GM12878 (cell line): ENCODE measurements at regions of chr6 and their contacts with region 1.

Region 1: GRCh38 chr6:39696986-39697788 is 28.0 kb downstream of the KIF6 start:
- DNase-seq: peak; percentile 38
- ATAC-seq: peak; percentile 87
- H3K4me3 ChIP-seq: no peak overlapping the region
- H3K27ac ChIP-seq: peak overlapping the region; percentile 25
- H3K4me1 ChIP-seq: peaks cover 7% of the 10 kb centered on the region; the same call in 1 of the 2 replicates
- H3K27me3 ChIP-seq: no peaks in the 10 kb centered on the region
- CTCF ChIP-seq: no peak
- EP300 ChIP-seq: no peak
- POLR2A ChIP-seq: no peak
- RAD21 ChIP-seq: no peak

Region 2: GRCh38 chr6:39714802-39715201 is 17.6 kb after region 1 on chr6:
- CTCF ChIA-PET with region 1: interaction called, 6 read pairs
- POLR2A ChIA-PET with region 1: interaction called, 3 read pairs
- RAD21 ChIA-PET with region 1: interaction called, 3 read pairs
- SMC1A ChIA-PET with region 1: interaction called, 11 read pairs
- in situ Hi-C with region 1: no loop called
- intact Hi-C with region 1: no loop called
- DNase-seq: no peak
- ATAC-seq: no peak
- H3K4me3 ChIP-seq: no peak overlapping the region
- H3K27ac ChIP-seq: no peak overlapping the region
- H3K4me1 ChIP-seq: no peaks in the 10 kb centered on the region
- H3K27me3 ChIP-seq: no peaks in the 10 kb centered on the region
- CTCF ChIP-seq: no peak
- EP300 ChIP-seq: no peak
- POLR2A ChIP-seq: no peak
- RAD21 ChIP-seq: no peak